K562 (cell line): ENCODE measurements at regions of chr17 and their contacts with region 1.

Region 1: DNA sequence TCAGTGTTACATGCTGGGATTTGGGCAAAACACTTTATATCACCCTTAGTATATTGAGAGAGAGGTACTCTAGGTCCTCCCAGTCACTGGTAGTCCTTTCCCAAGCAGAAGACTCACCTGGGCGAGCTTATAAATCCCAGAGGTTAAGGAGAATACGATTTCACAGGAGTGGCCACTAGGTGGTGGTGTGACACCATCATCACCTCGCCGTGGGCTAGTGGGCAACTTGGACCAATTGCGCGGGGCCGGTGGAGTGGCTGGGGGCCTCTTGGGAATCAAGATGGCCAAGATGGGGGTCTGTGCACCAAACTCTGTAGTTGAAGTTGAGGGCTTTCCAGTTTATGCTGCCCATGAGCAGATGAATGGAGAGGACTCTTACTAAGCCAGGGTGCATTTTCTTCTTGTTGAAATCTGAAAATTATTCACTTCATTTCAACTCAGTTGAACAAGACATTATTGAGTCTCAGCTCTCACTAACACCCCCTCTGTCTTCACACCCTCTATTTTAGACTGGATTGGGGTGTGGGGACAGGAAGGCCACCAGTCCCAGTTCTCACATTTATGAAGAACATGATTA is 38.2 kb upstream of the PIRT start:
- DNase-seq: peak; percentile 42 to 47 (median 47)
- ATAC-seq: peak; percentile 75
- H3K4me3 ChIP-seq: no peak overlapping the region
- H3K27ac ChIP-seq: no peak overlapping the region
- H3K4me1 ChIP-seq: no peaks in the 10 kb centered on the region; a peak in 1 of 5 replicates
- H3K27me3 ChIP-seq: no peaks in the 10 kb centered on the region
- CTCF ChIP-seq: peak; percentile 50 to 61 (median 57); a peak in 5 of 6 replicates
- EP300 ChIP-seq: no peak
- POLR2A ChIP-seq: no peak
- RAD21 ChIP-seq: peak; percentile 42 to 71

Region 2: GRCh38 chr17:11144358-11145233 is 268.5 kb after region 1 on chr17:
- CTCF ChIA-PET with region 1: no interaction called
- POLR2A ChIA-PET with region 1: no interaction called
- in situ Hi-C with region 1: no loop called
- intact Hi-C with region 1: loop called (anchors 10 kb)
- DNase-seq: peak; percentile 4 to 21 (median 6)
- ATAC-seq: no peak
- H3K4me3 ChIP-seq: no peak overlapping the region
- H3K27ac ChIP-seq: no peak overlapping the region
- H3K4me1 ChIP-seq: no peaks in the 10 kb centered on the region
- H3K27me3 ChIP-seq: no peaks in the 10 kb centered on the region
- CTCF ChIP-seq: peak in 2 of 3 experiments; percentile 35 to 36; a peak in 4 of 6 replicates
- EP300 ChIP-seq: no peak
- POLR2A ChIP-seq: no peak
- RAD21 ChIP-seq: peak in 1 of 2 experiments; percentile 36; a peak in 1 of 4 replicates

Region 3: GRCh38 chr17:11644261-11645212 is 768.5 kb after region 1 on chr17:
- CTCF ChIA-PET with region 1: no interaction called
- POLR2A ChIA-PET with region 1: no interaction called
- in situ Hi-C with region 1: no loop called
- intact Hi-C with region 1: loop called (anchors 5 kb)
- DNase-seq: peak; percentile 37 to 76 (median 68)
- ATAC-seq: peak; percentile 76
- H3K4me3 ChIP-seq: no peak overlapping the region
- H3K27ac ChIP-seq: no peak overlapping the region
- H3K4me1 ChIP-seq: no peaks in the 10 kb centered on the region
- H3K27me3 ChIP-seq: no peaks in the 10 kb centered on the region
- CTCF ChIP-seq: peak; percentile 62 to 81 (median 68)
- EP300 ChIP-seq: no peak
- POLR2A ChIP-seq: no peak
- RAD21 ChIP-seq: peak in 1 of 2 experiments; percentile 51; a peak in 2 of 4 replicates

Region 4: DNA sequence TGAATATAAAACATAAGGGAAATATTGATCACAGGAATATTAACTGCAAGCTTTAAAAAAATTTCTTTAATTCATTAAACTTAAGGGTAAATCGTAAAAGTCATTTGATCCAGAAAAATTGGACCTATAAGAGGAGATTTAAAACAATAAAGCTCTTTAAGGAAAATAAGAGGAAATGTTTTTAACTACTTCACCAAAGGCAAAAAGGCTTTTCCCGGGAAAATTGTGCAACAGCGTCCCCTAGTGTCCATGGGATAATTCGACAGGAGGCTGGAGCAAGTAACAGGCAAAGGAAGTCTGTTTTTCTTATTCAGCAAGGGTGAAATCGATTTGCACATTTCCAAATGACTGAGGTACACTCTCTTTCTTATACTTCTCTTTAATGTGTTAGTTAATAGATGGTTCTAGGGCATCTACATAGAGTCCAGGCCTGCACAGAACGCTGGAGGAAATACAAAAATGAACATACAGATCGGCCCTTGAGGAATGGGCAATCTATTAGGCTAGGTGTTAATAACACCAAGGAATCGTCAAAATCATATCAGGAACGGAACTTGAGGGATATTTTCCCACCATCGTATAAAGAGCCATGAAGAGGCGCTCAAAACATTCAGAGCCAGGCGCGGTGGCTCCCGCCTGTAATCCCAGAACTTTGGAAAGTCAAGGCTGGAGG is 1059.8 kb after region 1 on chr17:
- CTCF ChIA-PET with region 1: interaction called, 3 read pairs
- POLR2A ChIA-PET with region 1: no interaction called
- in situ Hi-C with region 1: no loop called
- intact Hi-C with region 1: loop called (anchors 5 kb)
- DNase-seq: peak; percentile 30 to 74 (median 50)
- ATAC-seq: peak; percentile 59
- H3K4me3 ChIP-seq: no peak overlapping the region
- H3K27ac ChIP-seq: no peak overlapping the region
- H3K4me1 ChIP-seq: no peaks in the 10 kb centered on the region; a peak in 1 of 5 replicates
- H3K27me3 ChIP-seq: peaks cover 0 to 27% of the 10 kb centered on the region in 2 experiments; a peak in 2 of 5 replicates
- CTCF ChIP-seq: peak; percentile 73 to 91 (median 83)
- EP300 ChIP-seq: no peak
- POLR2A ChIP-seq: no peak
- RAD21 ChIP-seq: peak; percentile 72 to 89

Region 5: GRCh38 chr17:11986942-11987329 is 1110.9 kb after region 1 on chr17:
- CTCF ChIA-PET with region 1: interaction called, 13 read pairs
- POLR2A ChIA-PET with region 1: no interaction called
- in situ Hi-C with region 1: loop called (anchors 25 kb)
- intact Hi-C with region 1: loop called (anchors 1 kb)
- DNase-seq: peak; percentile 9 to 41 (median 13)
- ATAC-seq: peak; percentile 49
- H3K4me3 ChIP-seq: no peak overlapping the region
- H3K27ac ChIP-seq: no peak overlapping the region
- H3K4me1 ChIP-seq: no peaks in the 10 kb centered on the region
- H3K27me3 ChIP-seq: no peaks in the 10 kb centered on the region
- CTCF ChIP-seq: peak; percentile 17 to 54 (median 46); a peak in 4 of 6 replicates
- EP300 ChIP-seq: no peak
- POLR2A ChIP-seq: no peak
- RAD21 ChIP-seq: peak in 1 of 2 experiments; percentile 64; a peak in 3 of 4 replicates

Region 6: DNA sequence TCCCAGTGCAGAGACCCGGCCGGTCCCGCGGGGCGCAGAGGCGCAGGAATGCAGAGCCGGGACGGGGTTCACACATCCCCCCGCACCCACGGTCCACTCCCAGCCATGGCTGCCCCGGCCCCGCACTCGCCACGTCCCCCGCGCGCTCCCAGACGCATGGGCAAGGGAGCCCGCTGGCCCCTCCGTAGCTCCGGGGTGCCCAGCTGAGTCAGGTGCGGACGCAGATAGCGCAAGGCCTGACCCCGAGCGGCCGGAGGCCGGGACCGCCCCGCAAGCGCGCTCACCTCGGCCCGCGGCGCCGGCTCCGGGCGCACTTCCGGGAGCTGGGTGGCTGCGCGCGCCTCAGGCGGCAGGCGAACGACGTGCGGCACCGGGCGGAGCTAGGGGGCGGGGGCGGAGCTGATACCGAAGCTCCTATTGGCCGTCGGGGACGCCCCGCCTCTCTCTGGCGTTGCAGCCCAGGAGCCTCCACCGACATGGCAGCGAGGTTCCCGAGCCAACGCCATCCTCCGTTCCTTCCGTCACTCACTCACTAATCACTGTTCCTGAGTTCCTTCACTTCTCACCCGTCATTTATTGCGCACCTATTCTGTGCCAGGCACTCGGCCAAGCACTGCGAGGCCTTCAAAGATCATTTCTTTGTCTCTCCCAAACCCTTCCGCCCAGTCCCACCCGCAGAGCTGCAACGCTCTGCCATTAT is 1121.2 kb after region 1 on chr17 and contains the start of gene ZNF18:
- CTCF ChIA-PET with region 1: no interaction called
- POLR2A ChIA-PET with region 1: no interaction called
- in situ Hi-C with region 1: loop called (anchors 25 kb)
- intact Hi-C with region 1: no loop called
- DNase-seq: peak; percentile 92 to 95 (median 95)
- ATAC-seq: peak; percentile 99
- H3K4me3 ChIP-seq: peak within 1 kb of the TSS; percentile 91
- H3K27ac ChIP-seq: peak within 1 kb of the TSS; percentile 79
- H3K4me1 ChIP-seq: peaks cover 0 to 4% of the 10 kb centered on the region in 2 experiments; a peak in 2 of 5 replicates
- H3K27me3 ChIP-seq: no peaks in the 10 kb centered on the region
- CTCF ChIP-seq: no peak
- EP300 ChIP-seq: no peak
- POLR2A ChIP-seq: peak; percentile 97
- RAD21 ChIP-seq: no peak
- polyA plus RNA-seq, gene ZNF18: 1.1 to 3.4 TPM